Activated B cell treated with CpG ODN at 0.5 μM for 24 hours (primary cell): ENCODE measurements at regions of chr12 and their contacts with region 1.

Region 1: GRCh38 chr12:76586764-76587395 is 27.3 kb upstream of the OSBPL8 start:
- DNase-seq: no peak
- ATAC-seq: peak; percentile 58
- H3K4me3 Mint-ChIP-seq: no peak overlapping the region
- H3K27ac Mint-ChIP-seq: no peak overlapping the region
- H3K4me1 Mint-ChIP-seq: peaks cover 9% of the 10 kb centered on the region
- H3K27me3 Mint-ChIP-seq: no peaks in the 10 kb centered on the region
- CTCF ChIP-seq: peak; percentile 82

Region 2: GRCh38 chr12:75526655-75527511 is 1060.0 kb before region 1 on chr12:
- CTCF ChIA-PET with region 1: interaction called, 16 read pairs
- POLR2A ChIA-PET with region 1: no interaction called
- intact Hi-C with region 1: loop called (anchors 1 kb)
- DNase-seq: no peak
- ATAC-seq: peak; percentile 74
- H3K4me3 Mint-ChIP-seq: no peak overlapping the region
- H3K27ac Mint-ChIP-seq: no peak overlapping the region
- H3K4me1 Mint-ChIP-seq: peaks cover 6% of the 10 kb centered on the region
- H3K27me3 Mint-ChIP-seq: peaks cover 31% of the 10 kb centered on the region
- CTCF ChIP-seq: no peak

Region 3: GRCh38 chr12:75814851-75815754 is 771.8 kb before region 1 on chr12:
- CTCF ChIA-PET with region 1: no interaction called
- POLR2A ChIA-PET with region 1: no interaction called
- intact Hi-C with region 1: loop called (anchors 5 kb)
- DNase-seq: no peak
- ATAC-seq: peak; percentile 82
- H3K4me3 Mint-ChIP-seq: no peak overlapping the region
- H3K27ac Mint-ChIP-seq: no peak overlapping the region
- H3K4me1 Mint-ChIP-seq: peaks cover 13% of the 10 kb centered on the region
- H3K27me3 Mint-ChIP-seq: no peaks in the 10 kb centered on the region
- CTCF ChIP-seq: no peak

Region 4: GRCh38 chr12:76158518-76159321 is 428.2 kb before region 1 on chr12:
- CTCF ChIA-PET with region 1: interaction called, 9 read pairs
- POLR2A ChIA-PET with region 1: no interaction called
- intact Hi-C with region 1: loop called (anchors 5 kb)
- DNase-seq: peak; percentile 33
- ATAC-seq: peak; percentile 99
- H3K4me3 Mint-ChIP-seq: peak overlapping the region; percentile 82
- H3K27ac Mint-ChIP-seq: peak overlapping the region; percentile 88
- H3K4me1 Mint-ChIP-seq: peaks cover 20% of the 10 kb centered on the region
- H3K27me3 Mint-ChIP-seq: no peaks in the 10 kb centered on the region
- CTCF ChIP-seq: no peak

Region 5: DNA sequence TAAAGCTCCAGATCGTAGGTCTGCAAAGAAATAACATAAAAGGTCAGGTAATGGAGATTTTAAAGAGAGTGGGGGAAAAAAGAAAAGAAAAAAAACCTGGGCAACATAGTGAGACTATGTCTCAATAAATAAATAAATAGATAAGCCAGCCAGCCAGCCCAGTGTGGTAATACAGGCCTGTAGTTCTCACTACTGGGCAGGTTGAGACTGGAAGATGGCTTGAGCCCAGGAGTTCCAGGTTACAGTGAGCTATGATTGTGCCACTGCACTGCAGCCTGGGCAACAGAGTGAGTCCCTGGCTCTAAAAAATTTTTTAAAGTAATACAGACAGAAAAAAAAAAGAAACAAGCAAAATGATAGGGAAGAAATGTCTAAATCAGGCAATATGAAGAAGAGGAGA is 195.4 kb before region 1 on chr12:
- CTCF ChIA-PET with region 1: interaction called, 4 read pairs
- POLR2A ChIA-PET with region 1: no interaction called
- intact Hi-C with region 1: loop called (anchors 5 kb)
- DNase-seq: no peak
- ATAC-seq: no peak
- H3K4me3 Mint-ChIP-seq: no peak overlapping the region
- H3K27ac Mint-ChIP-seq: no peak overlapping the region
- H3K4me1 Mint-ChIP-seq: no peaks in the 10 kb centered on the region
- H3K27me3 Mint-ChIP-seq: no peaks in the 10 kb centered on the region
- CTCF ChIP-seq: no peak

Region 6: DNA sequence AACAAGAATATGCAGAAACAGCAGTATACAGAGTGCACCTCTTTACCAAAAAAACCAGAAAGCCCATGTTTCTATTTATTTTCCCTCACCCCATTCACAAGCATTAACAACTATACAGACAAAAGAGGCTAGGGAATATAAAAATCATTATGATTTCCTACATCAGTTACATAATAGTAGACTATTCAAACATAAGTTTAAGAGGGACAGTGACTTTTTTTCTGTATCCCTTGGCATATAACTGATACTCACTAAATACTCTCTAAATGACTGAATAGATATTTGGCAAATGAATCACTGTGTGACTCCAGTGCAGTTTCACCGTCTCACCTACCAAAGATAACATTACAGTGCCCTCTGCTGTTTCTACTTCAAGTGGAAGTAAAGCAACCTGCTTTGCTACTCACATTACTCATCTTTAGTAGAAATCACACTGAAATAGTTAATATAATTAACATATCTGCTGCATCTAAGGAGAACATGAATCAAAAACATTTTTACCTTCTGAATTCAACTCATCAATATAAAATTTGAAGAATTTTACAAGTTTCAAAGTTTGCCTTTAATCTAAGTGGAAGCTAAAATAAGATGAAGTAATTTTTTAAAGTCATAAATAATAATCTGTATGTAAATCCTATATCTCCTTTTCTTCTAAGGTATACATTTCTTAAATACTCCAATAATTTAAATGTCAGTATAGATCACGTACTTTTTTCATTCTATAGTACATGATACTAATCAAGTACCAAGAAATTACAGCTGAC is 131.1 kb before region 1 on chr12:
- CTCF ChIA-PET with region 1: interaction called, 34 read pairs
- POLR2A ChIA-PET with region 1: no interaction called
- intact Hi-C with region 1: loop called (anchors 1 kb)
- DNase-seq: no peak
- ATAC-seq: peak; percentile 62
- H3K4me3 Mint-ChIP-seq: no peak overlapping the region
- H3K27ac Mint-ChIP-seq: no peak overlapping the region
- H3K4me1 Mint-ChIP-seq: peaks cover 9% of the 10 kb centered on the region
- H3K27me3 Mint-ChIP-seq: no peaks in the 10 kb centered on the region
- CTCF ChIP-seq: no peak